ENCODE measurements at regions of chr16 and their contacts with region 1.

Region 1: DNA sequence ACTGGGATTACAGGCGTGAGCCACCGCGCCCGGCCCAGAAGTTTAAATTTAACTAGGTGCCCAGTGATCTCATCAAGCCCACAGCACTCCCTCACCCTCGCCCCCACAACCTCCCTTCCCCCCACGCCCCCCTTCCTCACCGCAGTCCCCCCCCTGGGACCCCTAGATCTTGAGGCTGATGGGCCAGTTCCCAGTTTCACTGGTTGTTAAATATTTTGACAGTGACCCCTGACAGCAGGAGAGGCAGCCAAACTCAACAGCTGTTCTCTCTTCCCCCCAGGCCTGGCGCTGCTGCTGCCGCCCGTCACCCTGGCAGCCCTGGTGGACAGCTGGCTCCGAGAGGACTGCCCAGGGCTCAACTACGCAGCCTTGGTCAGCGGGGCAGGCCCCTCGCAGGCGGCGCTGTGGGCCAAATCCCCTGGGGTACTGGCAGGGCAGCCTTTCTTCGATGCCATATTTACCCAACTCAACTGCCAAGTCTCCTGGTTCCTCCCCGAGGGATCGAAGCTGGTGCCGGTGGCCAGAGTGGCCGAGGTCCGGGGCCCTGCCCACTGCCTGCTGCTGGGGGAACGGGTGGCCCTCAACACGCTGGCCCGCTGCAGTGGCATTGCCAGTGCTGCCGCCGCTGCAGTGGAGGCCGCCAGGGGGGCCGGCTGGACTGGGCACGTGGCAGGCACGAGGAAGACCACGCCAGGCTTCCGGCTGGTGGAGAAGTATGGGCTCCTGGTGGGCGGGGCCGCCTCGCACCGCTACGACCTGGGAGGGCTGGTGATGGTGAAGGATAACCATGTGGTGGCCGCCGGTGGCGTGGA is 15.6 kb downstream of the QPRT start:
- DNase-seq: no peak
- ATAC-seq: no peak
- H3K4me3 Mint-ChIP-seq: no peak overlapping the region
- H3K27ac Mint-ChIP-seq: no peak overlapping the region
- H3K4me1 Mint-ChIP-seq: peaks cover 2% of the 10 kb centered on the region
- H3K27me3 Mint-ChIP-seq: no peaks in the 10 kb centered on the region
- CTCF ChIP-seq: no peak

Region 2: GRCh38 chr16:29678691-29679267 is 15.8 kb before region 1 on chr16 and contains the start of gene QPRT:
- CTCF ChIA-PET with region 1: interaction called, 18 read pairs
- POLR2A ChIA-PET with region 1: interaction called, 3 read pairs
- intact Hi-C with region 1: no loop called
- DNase-seq: peak; percentile 23
- ATAC-seq: peak; percentile 21
- H3K4me3 Mint-ChIP-seq: peak within 1 kb of the TSS; percentile 66
- H3K27ac Mint-ChIP-seq: peak within 1 kb of the TSS; percentile 88
- H3K4me1 Mint-ChIP-seq: peaks cover 20% of the 10 kb centered on the region
- H3K27me3 Mint-ChIP-seq: no peaks in the 10 kb centered on the region
- CTCF ChIP-seq: no peak
- total RNA-seq, gene QPRT: 9.3 to 11.7 TPM

Region 3: DNA sequence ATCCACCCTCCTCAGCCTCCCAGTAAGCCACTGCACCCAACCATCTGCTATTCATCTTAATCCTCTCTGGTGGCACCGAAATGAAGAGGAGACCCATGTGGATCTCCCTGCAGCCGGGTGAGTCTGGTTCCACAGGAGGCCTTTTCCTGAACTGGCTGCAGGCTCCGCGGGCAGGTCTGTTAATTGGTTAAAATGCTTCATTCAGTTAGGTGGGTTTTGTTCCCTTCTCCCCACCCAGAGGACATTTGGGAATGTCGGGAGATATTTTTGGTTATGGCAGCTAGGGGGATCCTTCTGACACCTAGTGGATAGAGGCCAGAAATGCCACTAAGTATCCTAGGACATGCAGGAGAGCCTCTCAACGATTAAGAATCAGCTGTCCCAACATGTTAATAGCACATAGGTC is 34.5 kb after region 1 on chr16:
- CTCF ChIA-PET with region 1: interaction called, 12 read pairs
- POLR2A ChIA-PET with region 1: interaction called, 3 read pairs
- intact Hi-C with region 1: no loop called
- DNase-seq: no peak
- ATAC-seq: no peak
- H3K4me3 Mint-ChIP-seq: no peak overlapping the region
- H3K27ac Mint-ChIP-seq: no peak overlapping the region
- H3K4me1 Mint-ChIP-seq: peaks cover 33% of the 10 kb centered on the region
- H3K27me3 Mint-ChIP-seq: no peaks in the 10 kb centered on the region
- CTCF ChIP-seq: peak; percentile 32

Region 4: GRCh38 chr16:29891525-29892457 is 197.2 kb after region 1 on chr16:
- CTCF ChIA-PET with region 1: no interaction called
- POLR2A ChIA-PET with region 1: no interaction called
- intact Hi-C with region 1: no loop called
- DNase-seq: no peak
- ATAC-seq: no peak
- H3K4me3 Mint-ChIP-seq: no peak overlapping the region
- H3K27ac Mint-ChIP-seq: no peak overlapping the region
- H3K4me1 Mint-ChIP-seq: no peaks in the 10 kb centered on the region
- H3K27me3 Mint-ChIP-seq: peaks cover 7% of the 10 kb centered on the region
- CTCF ChIP-seq: no peak

Region 5: DNA sequence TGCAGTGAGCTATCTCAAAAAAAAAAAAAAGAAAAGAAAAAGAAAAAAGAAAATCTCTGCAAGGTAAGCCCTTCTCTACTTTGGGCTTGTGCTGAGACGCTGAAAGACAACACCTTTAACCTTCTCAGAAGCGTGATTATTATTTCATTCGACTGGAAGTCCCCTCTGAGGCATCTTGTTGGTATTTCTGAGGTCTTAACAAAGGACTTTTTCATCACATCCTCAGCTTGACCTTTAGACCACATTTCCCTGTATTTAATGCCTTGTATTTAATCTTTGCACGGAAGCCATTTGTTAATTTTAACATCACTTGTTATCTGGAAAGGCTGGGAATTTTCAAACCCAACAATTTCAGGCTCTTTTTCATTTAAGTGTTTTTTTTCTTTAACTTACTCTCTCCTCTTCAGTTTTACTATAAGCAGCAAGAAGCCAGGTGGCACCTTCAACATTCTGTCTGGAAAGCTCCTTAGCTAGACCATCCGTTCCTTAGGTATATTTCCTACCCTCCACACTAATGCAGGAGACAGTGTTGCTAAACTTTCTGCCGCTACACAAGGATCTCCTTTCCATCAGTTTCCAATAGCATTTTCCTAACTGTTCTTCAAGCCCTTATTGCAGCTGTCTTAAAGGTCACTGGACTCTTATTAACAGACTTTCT is 221.1 kb after region 1 on chr16:
- CTCF ChIA-PET with region 1: interaction called, 10 read pairs
- POLR2A ChIA-PET with region 1: no interaction called
- intact Hi-C with region 1: no loop called
- DNase-seq: no peak
- ATAC-seq: peak; percentile 51
- H3K4me3 Mint-ChIP-seq: no peak overlapping the region
- H3K27ac Mint-ChIP-seq: peak overlapping the region; percentile 68
- H3K4me1 Mint-ChIP-seq: peaks cover 18% of the 10 kb centered on the region
- H3K27me3 Mint-ChIP-seq: no peaks in the 10 kb centered on the region
- CTCF ChIP-seq: no peak

Region 6: DNA sequence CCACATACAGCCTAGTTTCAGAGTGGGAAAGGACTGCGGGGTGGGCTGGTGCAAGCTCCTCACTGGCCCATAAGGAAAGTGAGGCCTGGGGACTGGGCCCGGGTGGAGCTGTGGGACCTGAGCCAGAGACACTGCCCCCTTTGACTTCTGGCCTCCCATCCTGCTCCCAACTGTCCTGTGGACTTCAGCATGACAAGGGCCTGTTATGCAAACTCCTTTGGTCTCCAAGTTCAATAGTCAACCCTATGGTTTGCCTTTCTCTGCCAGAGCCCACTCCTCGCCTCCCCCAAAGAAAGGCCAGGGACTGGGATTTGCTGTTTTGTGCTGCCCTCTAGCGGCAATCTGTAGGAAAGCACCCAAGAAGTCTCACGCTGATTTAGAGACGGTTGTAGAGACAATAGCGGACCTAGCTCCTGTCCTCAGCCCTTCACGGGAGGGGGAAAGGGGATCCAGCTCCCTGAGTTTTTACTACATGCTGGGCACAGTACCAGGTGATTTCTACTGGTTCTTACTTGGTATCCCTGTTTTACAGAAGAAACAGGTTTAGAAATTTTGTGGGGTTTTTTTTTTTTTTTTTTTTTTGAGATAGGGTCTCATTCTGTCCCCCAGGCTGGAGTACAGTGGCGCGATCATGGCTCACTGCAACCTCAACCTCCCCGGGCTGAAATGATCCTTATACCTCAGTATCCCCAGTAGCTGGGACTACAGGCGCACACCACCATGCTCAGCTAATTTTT is 337.7 kb after region 1 on chr16:
- CTCF ChIA-PET with region 1: interaction called, 32 read pairs
- POLR2A ChIA-PET with region 1: no interaction called
- intact Hi-C with region 1: no loop called
- DNase-seq: peak; percentile 79
- ATAC-seq: peak; percentile 57
- H3K4me3 Mint-ChIP-seq: no peak overlapping the region
- H3K27ac Mint-ChIP-seq: no peak overlapping the region
- H3K4me1 Mint-ChIP-seq: peaks cover 2% of the 10 kb centered on the region
- H3K27me3 Mint-ChIP-seq: peaks cover 46% of the 10 kb centered on the region
- CTCF ChIP-seq: peak; percentile 87

Measured in activated CD8-positive, alpha-beta T cell treated with anti-CD3 and anti-CD28 coated beads for 36 hours (primary cell).